ENCODE measurements at regions of chr2 and their contacts with region 1.

Region 1: DNA sequence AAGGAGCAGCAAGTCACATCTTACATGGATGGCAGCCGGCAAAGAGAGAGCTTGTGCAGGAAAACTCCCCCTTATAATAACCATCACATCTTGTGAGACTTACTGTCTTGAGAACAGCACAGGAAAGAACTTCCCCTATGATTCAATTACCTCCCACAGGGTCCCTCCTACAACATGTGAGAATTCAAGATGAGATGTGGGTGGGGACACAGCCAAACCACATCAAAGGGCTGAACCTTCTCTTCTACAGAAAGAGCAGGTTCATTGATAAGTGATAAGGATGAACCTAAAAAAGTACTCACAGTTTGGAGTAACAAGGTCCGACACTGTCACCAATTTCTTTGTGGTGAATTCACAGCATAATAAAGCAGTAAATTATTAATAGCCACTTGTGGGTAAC is 422.2 kb upstream of the FSIP2 start:
- DNase-seq: no peak
- H3K4me3 ChIP-seq: no peak overlapping the region
- H3K27ac ChIP-seq: no peak overlapping the region
- H3K4me1 ChIP-seq: no peaks in the 10 kb centered on the region
- H3K27me3 ChIP-seq: no peaks in the 10 kb centered on the region
- CTCF ChIP-seq: no peak

Region 2: DNA sequence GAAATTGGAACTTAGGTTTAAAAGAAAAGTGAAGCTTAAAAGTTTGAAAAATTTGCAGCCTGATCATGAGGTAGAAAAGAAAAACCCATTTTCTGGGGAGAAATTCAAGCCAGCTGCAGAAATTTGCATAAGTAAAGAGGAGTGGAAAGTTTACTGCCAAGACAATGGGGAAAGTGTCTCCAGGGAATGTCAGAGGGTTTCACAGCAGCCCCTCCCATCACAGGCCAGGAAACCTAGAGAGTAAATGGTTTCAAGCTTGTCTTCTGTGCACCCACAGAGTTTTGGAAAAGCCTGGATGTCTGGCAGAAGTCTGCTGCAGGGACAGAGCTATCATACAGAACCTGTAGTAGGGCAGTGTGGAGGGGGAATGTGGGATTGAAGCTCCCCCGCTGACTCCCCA is 168.2 kb after region 1 on chr2:
- intact Hi-C with region 1: loop called (anchors 10 kb)
- DNase-seq: no peak
- H3K4me3 ChIP-seq: no peak overlapping the region
- H3K27ac ChIP-seq: no peak overlapping the region
- H3K4me1 ChIP-seq: no peaks in the 10 kb centered on the region
- H3K27me3 ChIP-seq: no peaks in the 10 kb centered on the region
- CTCF ChIP-seq: no peak

Measured in colonic mucosa (tissue), 4 donors.